ENCODE measurements at regions of chr3 and their contacts with region 1.

Region 1: GRCh38 chr3:42839616-42840015 is 30.4 kb downstream of the ACKR2 start:
- DNase-seq: peak in 1 of 2 donors; percentile 32
- ATAC-seq: peak; percentile 95 to 96
- H3K4me3 ChIP-seq: no peak overlapping the region
- H3K27ac ChIP-seq: no peak overlapping the region
- H3K4me1 ChIP-seq: no peaks in the 10 kb centered on the region
- H3K27me3 ChIP-seq: no peaks in the 10 kb centered on the region
- CTCF ChIP-seq: peak; percentile 70 to 87 (median 80)
- POLR2A ChIP-seq: no peak

Region 2: DNA sequence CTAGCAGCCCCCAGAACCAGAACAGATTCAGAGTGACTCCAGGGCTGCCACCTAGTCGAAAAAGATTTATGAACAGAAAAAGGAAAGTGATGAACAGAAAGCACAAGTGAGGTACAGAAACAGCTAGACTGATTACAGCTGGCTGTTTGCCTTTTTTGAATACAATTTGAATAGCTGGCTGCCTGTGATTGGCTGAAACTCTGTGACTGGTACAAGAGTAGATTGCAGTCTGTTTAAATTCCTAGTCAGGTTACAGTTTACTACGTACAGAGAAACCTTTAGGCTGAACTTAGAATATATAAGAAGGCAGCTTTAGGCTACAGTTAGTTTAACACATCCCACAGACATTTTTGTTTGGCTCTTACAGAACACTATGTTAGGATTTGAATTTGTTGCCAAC is 76.6 kb before region 1 on chr3:
- in situ Hi-C with region 1: no loop called
- intact Hi-C with region 1: no loop called
- DNase-seq: no peak
- ATAC-seq: no peak
- H3K4me3 ChIP-seq: no peak overlapping the region
- H3K27ac ChIP-seq: peak overlapping the region in 1 of 4 donors; percentile 54
- H3K4me1 ChIP-seq: peaks cover 0 to 11% of the 10 kb centered on the region in 2 donors
- H3K27me3 ChIP-seq: no peaks in the 10 kb centered on the region
- CTCF ChIP-seq: no peak
- POLR2A ChIP-seq: no peak

Region 3: GRCh38 chr3:42786212-42786611 is 53.4 kb before region 1 on chr3:
- in situ Hi-C with region 1: loop called in 3 of 4 experiments (anchors 5 to 10 kb)
- intact Hi-C with region 1: loop called (anchors 2 kb)
- DNase-seq: no peak
- ATAC-seq: no peak
- H3K4me3 ChIP-seq: no peak overlapping the region
- H3K27ac ChIP-seq: no peak overlapping the region
- H3K4me1 ChIP-seq: no peaks in the 10 kb centered on the region
- H3K27me3 ChIP-seq: no peaks in the 10 kb centered on the region
- CTCF ChIP-seq: no peak
- POLR2A ChIP-seq: no peak